Heart right ventricle (tissue), 16 donors: ENCODE measurements at regions of chr9 and their contacts with region 1.

Region 1: GRCh38 chr9:136151214-136151804 is 32.6 kb upstream of the TMEM250 start:
- DNase-seq: no peak
- ATAC-seq: no peak
- H3K4me3 ChIP-seq: no peak overlapping the region
- H3K27ac ChIP-seq: no peak overlapping the region
- H3K4me1 ChIP-seq: no peaks in the 10 kb centered on the region
- H3K27me3 ChIP-seq: peaks cover 4 to 45% (median 33%) of the 10 kb centered on the region in 7 donors
- CTCF ChIP-seq: no peak

Region 2: DNA sequence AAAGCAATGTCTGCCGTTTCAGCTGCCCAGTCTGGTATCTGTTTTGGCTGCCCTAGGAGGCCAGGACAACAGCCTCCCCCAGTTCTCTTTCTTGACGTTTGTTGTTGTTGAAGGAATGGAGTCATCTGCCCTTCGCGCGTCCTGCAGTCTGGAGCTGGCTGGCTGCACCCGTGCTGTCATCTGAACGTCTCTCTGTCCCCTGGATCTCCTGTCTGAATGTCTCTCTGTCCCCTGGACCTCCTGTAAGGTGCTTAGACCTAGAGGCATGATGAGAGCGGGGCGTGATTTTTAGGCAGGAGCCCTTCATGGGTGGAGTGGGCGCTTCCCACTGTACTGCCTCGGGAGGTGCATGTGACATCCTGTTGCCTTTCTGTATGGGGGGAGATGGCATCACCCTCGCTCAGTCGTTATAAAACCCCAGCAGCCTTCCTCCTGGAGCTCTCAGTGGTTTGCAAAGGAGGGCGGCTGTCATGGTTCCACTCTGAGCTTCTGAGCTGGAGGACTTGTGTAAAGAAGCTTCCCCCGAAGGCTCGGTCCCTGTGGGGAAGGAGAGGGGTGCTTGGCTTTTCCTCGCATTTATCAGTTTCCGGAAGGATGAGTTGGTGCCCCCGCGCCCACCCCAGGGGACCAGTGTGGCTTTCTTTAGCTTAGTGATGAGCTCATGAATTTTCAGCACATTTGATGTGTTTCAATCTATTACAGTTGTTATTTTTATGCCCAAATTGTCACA is 1113.6 kb before region 1 on chr9:
- intact Hi-C with region 1: loop called in 1 of 10 experiments (anchors 10 kb)
- DNase-seq: no peak
- ATAC-seq: no peak
- H3K4me3 ChIP-seq: no peak overlapping the region
- H3K27ac ChIP-seq: no peak overlapping the region
- H3K4me1 ChIP-seq: no peaks in the 10 kb centered on the region
- H3K27me3 ChIP-seq: peaks cover 0 to 50% (median 30%) of the 10 kb centered on the region in 7 donors
- CTCF ChIP-seq: no peak

Region 3: DNA sequence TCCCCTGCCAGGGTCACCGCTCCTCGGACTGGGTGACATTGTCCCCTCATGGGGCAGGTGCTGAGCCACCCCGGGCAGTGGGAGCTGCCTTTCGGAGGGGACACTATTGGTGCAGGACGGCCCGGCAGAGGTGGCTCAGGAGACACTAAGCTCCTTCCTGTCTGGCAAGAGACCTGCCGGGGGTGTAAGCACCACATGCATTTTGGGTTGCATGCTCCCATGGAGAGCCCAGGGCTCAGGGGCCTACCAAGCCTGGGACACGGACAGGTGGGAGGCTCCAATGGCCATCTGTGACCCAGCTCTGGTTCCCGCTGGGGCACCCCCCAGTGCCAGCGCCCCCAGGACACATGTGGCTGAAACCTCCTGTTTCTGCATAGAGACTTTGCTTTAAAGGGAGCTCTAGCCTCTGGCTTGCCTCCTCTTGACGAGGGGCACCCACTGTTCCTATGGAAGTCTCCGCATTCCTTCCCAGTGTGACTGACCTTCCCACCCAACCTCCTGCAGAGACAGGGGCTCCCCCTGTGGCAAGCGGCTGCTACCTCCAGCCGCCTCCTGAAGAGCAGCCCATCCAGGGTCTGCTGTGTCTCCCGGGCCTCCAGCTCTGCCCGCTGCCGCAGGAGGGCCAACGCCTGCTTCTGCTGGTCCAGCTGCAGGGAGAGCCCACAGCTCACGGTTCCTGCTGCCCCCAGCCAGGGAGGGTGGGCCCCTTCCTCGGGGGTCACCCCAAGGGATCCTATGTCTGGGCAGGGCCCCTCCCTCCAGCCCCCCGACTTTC is 124.5 kb after region 1 on chr9:
- intact Hi-C with region 1: loop called in 2 of 10 experiments (anchors 5 to 10 kb)
- DNase-seq: no peak
- ATAC-seq: peak in 1 of 8 donors; percentile 24
- H3K4me3 ChIP-seq: no peak overlapping the region
- H3K27ac ChIP-seq: no peak overlapping the region
- H3K4me1 ChIP-seq: no peaks in the 10 kb centered on the region
- H3K27me3 ChIP-seq: peaks cover 0 to 55% (median 36%) of the 10 kb centered on the region in 7 donors
- CTCF ChIP-seq: no peak

Region 4: GRCh38 chr9:136631038-136632000 is 480.0 kb after region 1 on chr9:
- intact Hi-C with region 1: no loop called
- DNase-seq: peak; percentile 82 to 86
- ATAC-seq: peak; percentile 86 to 95 (median 92)
- H3K4me3 ChIP-seq: no peak overlapping the region
- H3K27ac ChIP-seq: no peak overlapping the region
- H3K4me1 ChIP-seq: peaks cover under 1 to 28% (median 17%) of the 10 kb centered on the region in 9 donors
- H3K27me3 ChIP-seq: peaks cover 0 to 18% (median 0%) of the 10 kb centered on the region in 7 donors
- CTCF ChIP-seq: peak; percentile 75 to 90 (median 87)